Sigmoid colon (tissue), 7 donors: ENCODE measurements at regions of chr2 and their contacts with region 1.

Region 1: DNA sequence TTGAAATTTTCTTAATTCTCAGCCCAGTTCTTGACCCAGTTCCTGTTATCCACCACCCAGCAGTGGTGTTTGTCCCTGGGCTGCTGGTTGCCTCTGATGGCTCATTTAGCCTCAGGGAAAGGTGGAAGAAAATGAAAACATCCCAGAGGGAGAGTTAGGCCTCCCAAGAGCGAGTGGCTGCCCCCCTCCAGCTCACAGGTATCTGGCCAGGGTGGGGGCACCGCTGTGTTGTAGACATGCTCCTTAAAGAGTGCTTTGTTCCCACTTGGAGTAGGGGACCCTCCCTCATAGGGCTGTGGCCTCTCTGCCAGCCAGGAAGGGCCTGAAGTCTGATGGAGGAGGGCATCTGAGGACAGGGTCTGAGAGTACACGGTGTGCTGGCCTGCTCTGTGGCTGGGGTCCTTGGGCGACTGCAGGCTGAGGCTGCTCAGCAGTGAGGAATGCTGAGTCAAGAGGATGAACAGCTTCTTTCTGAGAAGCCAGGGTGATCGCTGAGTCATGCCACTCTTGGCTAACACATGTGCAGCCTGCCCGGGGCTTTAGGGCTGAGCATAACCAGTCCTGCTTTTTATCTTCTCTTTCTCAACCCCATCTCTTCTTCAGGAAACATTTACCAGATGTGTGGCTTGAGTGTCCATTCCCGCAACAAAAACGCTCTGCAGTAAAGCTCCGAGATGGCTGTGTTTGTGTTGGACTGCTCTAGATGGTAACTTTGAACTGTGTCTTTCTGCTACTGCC is 72.3 kb downstream of the IL1R2 start:
- DNase-seq: peak; percentile 98
- H3K4me3 ChIP-seq: peak overlapping the region in 1 of 4 donors; percentile 4
- H3K27ac ChIP-seq: peak overlapping the region; percentile 89 to 98 (median 94)
- H3K4me1 ChIP-seq: peaks cover 0 to 79% (median 68%) of the 10 kb centered on the region in 4 donors
- H3K27me3 ChIP-seq: no peaks in the 10 kb centered on the region
- CTCF ChIP-seq: no peak
- EP300 ChIP-seq: peak; percentile 55 to 99 (median 94)
- POLR2A ChIP-seq: no peak

Region 2: GRCh38 chr2:101697124-101698013 is 366.7 kb before region 1 on chr2 and contains the start of gene MAP4K4:
- intact Hi-C with region 1: loop called (anchors 5 kb)
- DNase-seq: peak; percentile 92
- H3K4me3 ChIP-seq: peak within 1 kb of the TSS; percentile 64 to 76 (median 68)
- H3K27ac ChIP-seq: peak within 1 kb of the TSS; percentile 88 to 90 (median 88)
- H3K4me1 ChIP-seq: peaks cover 0 to 41% (median 17%) of the 10 kb centered on the region in 4 donors
- H3K27me3 ChIP-seq: no peaks in the 10 kb centered on the region
- CTCF ChIP-seq: peak in 1 of 4 experiments; percentile 16
- EP300 ChIP-seq: no peak
- POLR2A ChIP-seq: no peak
- total RNA-seq, gene MAP4K4: 37.2 to 62.9 (median 48.9) TPM

Region 3: GRCh38 chr2:101793277-101793969 is 270.7 kb before region 1 on chr2:
- intact Hi-C with region 1: no loop called
- DNase-seq: no peak
- H3K4me3 ChIP-seq: no peak overlapping the region
- H3K27ac ChIP-seq: peak overlapping the region in 2 of 4 donors; percentile 6 to 18
- H3K4me1 ChIP-seq: peaks cover 2 to 57% (median 39%) of the 10 kb centered on the region in 4 donors
- H3K27me3 ChIP-seq: no peaks in the 10 kb centered on the region
- CTCF ChIP-seq: no peak
- EP300 ChIP-seq: no peak
- POLR2A ChIP-seq: no peak

Region 4: GRCh38 chr2:101949304-101949703 is 114.8 kb before region 1 on chr2:
- intact Hi-C with region 1: no loop called
- DNase-seq: no peak
- H3K4me3 ChIP-seq: no peak overlapping the region
- H3K27ac ChIP-seq: no peak overlapping the region
- H3K4me1 ChIP-seq: no peaks in the 10 kb centered on the region
- H3K27me3 ChIP-seq: no peaks in the 10 kb centered on the region
- CTCF ChIP-seq: no peak
- EP300 ChIP-seq: no peak
- POLR2A ChIP-seq: no peak

Region 5: GRCh38 chr2:102050854-102051391 is 13.2 kb before region 1 on chr2:
- intact Hi-C with region 1: loop called (anchors 1 kb)
- DNase-seq: peak; percentile 97
- H3K4me3 ChIP-seq: no peak overlapping the region
- H3K27ac ChIP-seq: peak overlapping the region; percentile 76 to 89 (median 82)
- H3K4me1 ChIP-seq: peaks cover 0 to 51% (median 43%) of the 10 kb centered on the region in 4 donors
- H3K27me3 ChIP-seq: no peaks in the 10 kb centered on the region
- CTCF ChIP-seq: no peak
- EP300 ChIP-seq: peak in 3 of 4 donors; percentile 32 to 76 (median 50)
- POLR2A ChIP-seq: no peak

Region 6: DNA sequence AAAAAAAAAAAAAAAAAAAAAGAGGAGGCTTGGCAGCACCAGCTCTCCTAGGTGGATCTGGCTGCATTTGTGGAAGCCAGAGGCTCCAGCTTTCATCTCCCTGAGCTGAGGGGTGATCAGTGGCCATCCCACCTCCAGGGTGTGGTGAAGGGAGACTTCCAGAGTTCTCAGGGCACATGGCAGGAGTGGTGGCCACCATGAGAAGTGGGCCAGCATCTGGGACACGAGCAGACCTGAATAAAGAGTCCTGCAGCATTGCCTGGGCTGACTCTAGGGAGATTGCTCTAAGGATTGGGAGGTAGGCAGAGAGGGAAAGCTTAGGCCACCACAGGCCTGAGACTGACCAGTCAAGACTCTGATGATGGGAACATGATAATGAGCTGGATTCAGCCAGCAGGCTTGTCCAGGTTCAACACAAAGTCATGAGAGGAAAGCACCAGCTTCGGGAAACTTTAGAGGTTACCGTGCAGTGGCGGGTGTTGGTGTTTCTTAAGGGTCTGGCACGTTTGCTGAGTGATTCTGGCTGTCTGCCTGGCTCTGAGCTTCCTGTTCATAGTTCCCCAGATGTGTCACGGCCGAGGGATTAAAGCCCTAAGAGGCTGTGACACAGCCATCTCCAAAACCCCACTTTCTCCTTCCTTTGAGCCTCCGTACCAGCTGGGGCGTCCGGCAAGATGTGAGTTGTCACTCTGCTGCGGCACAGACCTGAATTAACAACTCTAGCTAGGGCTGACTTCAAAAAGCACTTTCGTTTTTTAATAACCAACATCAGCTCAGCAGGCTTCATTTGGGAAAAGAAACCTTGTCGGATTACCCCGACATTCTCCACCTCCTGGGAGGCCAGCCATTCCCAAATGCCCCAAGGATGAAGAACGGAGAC is 40.1 kb after region 1 on chr2:
- intact Hi-C with region 1: loop called (anchors 2 kb)
- DNase-seq: peak; percentile 92
- H3K4me3 ChIP-seq: peak overlapping the region; percentile 22 to 41 (median 36)
- H3K27ac ChIP-seq: peak overlapping the region; percentile 60 to 81 (median 72)
- H3K4me1 ChIP-seq: peaks cover 0 to 51% (median 20%) of the 10 kb centered on the region in 4 donors
- H3K27me3 ChIP-seq: no peaks in the 10 kb centered on the region
- CTCF ChIP-seq: no peak
- EP300 ChIP-seq: no peak
- POLR2A ChIP-seq: no peak